ENCODE measurements at regions of chr6 and their contacts with region 1.

Region 1: DNA sequence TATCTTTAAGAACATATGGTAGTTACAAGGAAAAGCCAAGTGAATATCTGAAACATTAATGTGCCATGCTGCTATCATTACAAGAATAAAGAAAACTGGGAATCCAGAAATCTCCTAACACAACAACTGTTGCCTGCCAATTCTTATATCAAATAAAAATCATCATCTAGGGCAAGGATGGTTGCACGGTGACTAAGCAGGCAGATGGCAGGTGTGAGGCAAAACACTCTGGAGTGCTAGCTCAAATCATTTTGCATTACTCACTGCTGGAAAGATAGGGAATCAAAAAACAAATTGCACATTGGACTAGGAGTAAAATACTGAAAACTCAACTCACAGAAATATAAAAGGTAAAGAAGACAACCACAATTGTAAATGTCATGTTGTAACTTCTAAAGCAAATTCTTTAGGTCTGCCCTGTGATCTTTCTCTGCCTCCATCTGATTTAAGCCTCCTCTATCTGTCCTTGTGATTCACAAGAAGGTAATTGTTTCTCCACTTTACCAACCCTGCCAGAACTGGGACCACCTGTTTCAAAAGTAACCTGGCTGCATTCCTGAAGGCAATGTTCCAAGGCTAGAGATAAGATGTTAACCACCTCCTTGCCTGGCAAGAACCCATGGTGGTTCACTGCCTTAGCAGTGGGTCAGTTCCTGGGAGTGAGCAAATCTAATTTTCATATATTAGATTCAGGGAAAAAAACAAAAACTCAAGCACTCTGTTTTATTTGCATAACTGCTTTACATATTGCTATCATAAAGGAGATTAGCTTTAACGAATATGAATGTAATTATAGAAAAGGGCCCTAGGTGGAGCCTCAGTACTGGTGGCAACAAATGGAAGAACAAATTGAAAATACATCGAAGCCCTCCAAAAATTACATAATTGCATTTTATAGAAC is 33.1 kb upstream of the LCA5 start:
- DNase-seq: peak; percentile 54
- H3K4me3 ChIP-seq: peak overlapping the region in 1 of 2 experiments; percentile 27; a peak in 2 of 4 replicates
- H3K27ac ChIP-seq: peak overlapping the region in 1 of 2 experiments; percentile 43; a peak in 1 of 4 replicates
- H3K4me1 ChIP-seq: peaks cover 6 to 9% of the 10 kb centered on the region in 2 experiments; a peak in 3 of 4 replicates
- H3K27me3 ChIP-seq: no peaks in the 10 kb centered on the region
- CTCF ChIP-seq: peak; percentile 79
- EP300 ChIP-seq: no peak
- RAD21 ChIP-seq: peak; percentile 91

Region 2: GRCh38 chr6:79544939-79545450 is 25.4 kb before region 1 on chr6:
- CTCF ChIA-PET with region 1: interaction called, 10 read pairs
- POLR2A ChIA-PET with region 1: no interaction called
- DNase-seq: peak; percentile 75
- H3K4me3 ChIP-seq: peak overlapping the region in 1 of 2 experiments; percentile 14; a peak in 3 of 4 replicates
- H3K27ac ChIP-seq: peak overlapping the region; percentile 83 to 89
- H3K4me1 ChIP-seq: peaks cover 12 to 22% of the 10 kb centered on the region in 2 experiments
- H3K27me3 ChIP-seq: no peaks in the 10 kb centered on the region
- CTCF ChIP-seq: peak; percentile 61
- EP300 ChIP-seq: peak; percentile 33 to 72; a peak in 2 of 4 replicates
- RAD21 ChIP-seq: peak; percentile 48

Region 3: GRCh38 chr6:79612887-79613286 is 42.5 kb after region 1 on chr6:
- CTCF ChIA-PET with region 1: interaction called, 11 read pairs
- POLR2A ChIA-PET with region 1: no interaction called
- DNase-seq: no peak
- H3K4me3 ChIP-seq: no peak overlapping the region
- H3K27ac ChIP-seq: peak overlapping the region in 1 of 2 experiments; percentile 86; a peak in 2 of 4 replicates
- H3K4me1 ChIP-seq: peaks cover 0 to 37% of the 10 kb centered on the region in 2 experiments; a peak in 2 of 4 replicates
- H3K27me3 ChIP-seq: no peaks in the 10 kb centered on the region
- CTCF ChIP-seq: no peak
- EP300 ChIP-seq: no peak
- RAD21 ChIP-seq: no peak

Region 4: GRCh38 chr6:79687759-79688158 is 117.4 kb after region 1 on chr6:
- CTCF ChIA-PET with region 1: interaction called, 10 read pairs
- POLR2A ChIA-PET with region 1: no interaction called
- DNase-seq: no peak
- H3K4me3 ChIP-seq: no peak overlapping the region
- H3K27ac ChIP-seq: no peak overlapping the region
- H3K4me1 ChIP-seq: peaks cover 0 to 15% of the 10 kb centered on the region in 2 experiments; a peak in 2 of 4 replicates
- H3K27me3 ChIP-seq: no peaks in the 10 kb centered on the region
- CTCF ChIP-seq: no peak
- EP300 ChIP-seq: no peak
- RAD21 ChIP-seq: no peak

Region 5: GRCh38 chr6:79813854-79814709 is 243.7 kb after region 1 on chr6:
- CTCF ChIA-PET with region 1: interaction called, 19 read pairs
- POLR2A ChIA-PET with region 1: no interaction called
- DNase-seq: peak; percentile 68
- H3K4me3 ChIP-seq: no peak overlapping the region; a peak in 1 of 4 replicates
- H3K27ac ChIP-seq: peak overlapping the region in 1 of 2 experiments; percentile 100; a peak in 2 of 4 replicates
- H3K4me1 ChIP-seq: peaks cover 0 to 48% of the 10 kb centered on the region in 2 experiments; a peak in 3 of 4 replicates
- H3K27me3 ChIP-seq: no peaks in the 10 kb centered on the region
- CTCF ChIP-seq: peak; percentile 94
- EP300 ChIP-seq: peak in 1 of 2 experiments; percentile 34; a peak in 1 of 4 replicates
- RAD21 ChIP-seq: peak; percentile 98